ENCODE measurements at regions of chr21 and their contacts with region 1.

Region 1: DNA sequence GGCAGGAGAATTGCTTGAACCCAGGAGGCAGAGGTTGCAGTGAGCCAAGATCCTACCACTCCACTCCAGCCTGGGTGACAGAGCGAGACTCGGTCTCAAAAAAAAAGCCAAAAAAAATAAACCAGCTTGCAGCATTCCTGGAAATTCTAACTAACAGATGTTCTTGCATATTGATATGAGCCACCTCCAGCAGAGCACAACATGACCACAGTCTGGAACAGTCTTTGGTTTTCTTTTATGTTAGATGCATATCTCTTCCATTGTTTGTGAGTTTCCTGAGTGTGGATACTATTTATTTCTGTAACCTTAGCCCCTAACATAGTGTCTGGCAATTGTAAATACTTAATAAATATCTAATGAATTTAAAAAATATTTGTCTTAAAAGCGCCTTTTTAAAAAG is 23.9 kb downstream of the IFNAR1 start:
- DNase-seq: no peak
- ATAC-seq: no peak
- H3K4me3 ChIP-seq: no peak overlapping the region
- H3K4me3 Mint-ChIP-seq: no peak overlapping the region
- H3K27ac ChIP-seq: no peak overlapping the region
- H3K27ac Mint-ChIP-seq: no peak overlapping the region
- H3K4me1 ChIP-seq: peaks cover 15% of the 10 kb centered on the region
- H3K4me1 Mint-ChIP-seq: peaks cover 16% of the 10 kb centered on the region
- H3K27me3 ChIP-seq: no peaks in the 10 kb centered on the region
- H3K27me3 Mint-ChIP-seq: no peaks in the 10 kb centered on the region
- CTCF ChIP-seq: no peak

Region 2: DNA sequence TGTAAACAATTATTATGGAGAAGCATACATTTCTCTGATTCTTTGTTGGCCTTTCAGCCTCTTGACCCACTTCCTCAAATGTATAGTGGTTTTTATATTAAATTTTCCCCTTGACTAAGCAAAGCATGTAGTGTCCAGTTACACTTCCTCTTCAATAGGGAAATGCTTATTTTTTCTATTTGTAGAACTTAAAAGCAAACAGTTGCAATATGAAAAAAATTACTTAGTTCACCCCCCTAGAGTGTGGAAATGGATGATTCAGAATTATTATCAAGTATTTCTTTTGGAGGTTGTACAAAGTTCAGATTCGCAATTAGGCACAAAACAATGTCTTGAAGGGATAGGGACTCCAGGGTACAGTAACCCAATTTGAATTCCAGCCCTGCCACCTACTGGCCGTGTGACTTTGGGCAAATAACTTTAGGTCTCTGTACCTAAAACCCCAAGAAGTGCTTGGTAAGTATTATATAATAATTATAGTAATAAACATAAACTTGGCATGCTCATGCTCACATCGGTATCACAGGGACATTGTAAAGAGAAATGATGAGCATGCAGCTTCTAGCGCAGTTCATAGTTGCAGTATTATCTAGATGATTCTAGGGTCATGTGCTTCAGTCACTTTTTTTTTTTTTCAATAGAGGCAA is 25.9 kb after region 1 on chr21:
- CTCF ChIA-PET with region 1: interaction called, 6 read pairs
- POLR2A ChIA-PET with region 1: no interaction called
- intact Hi-C with region 1: loop called in 1 of 2 experiments (anchors 2 kb)
- DNase-seq: peak in 7 of 9 experiments; percentile 38 to 75 (median 67)
- ATAC-seq: peak; percentile 85
- H3K4me3 ChIP-seq: no peak overlapping the region
- H3K4me3 Mint-ChIP-seq: no peak overlapping the region
- H3K27ac ChIP-seq: no peak overlapping the region
- H3K27ac Mint-ChIP-seq: no peak overlapping the region
- H3K4me1 ChIP-seq: peaks cover 9% of the 10 kb centered on the region
- H3K4me1 Mint-ChIP-seq: peaks cover 12% of the 10 kb centered on the region
- H3K27me3 ChIP-seq: peaks cover 0 to 13% of the 10 kb centered on the region in 2 experiments
- H3K27me3 Mint-ChIP-seq: peaks cover 3% of the 10 kb centered on the region
- CTCF ChIP-seq: peak; percentile 66